Caco-2 (cell line): ENCODE measurements at regions of chr12 and their contacts with region 1.

Region 1: GRCh38 chr12:76790564-76791552 is 26.9 kb downstream of the ZDHHC17 start:
- DNase-seq: peak in 1 of 2 experiments; percentile 14
- H3K4me3 ChIP-seq: no peak overlapping the region
- H3K4me3 Mint-ChIP-seq: no peak overlapping the region
- H3K27ac Mint-ChIP-seq: no peak overlapping the region
- H3K4me1 ChIP-seq: peaks cover 4% of the 10 kb centered on the region; the same call in 1 of the 2 replicates
- H3K4me1 Mint-ChIP-seq: peaks cover 7% of the 10 kb centered on the region
- H3K27me3 ChIP-seq: no peaks in the 10 kb centered on the region
- H3K27me3 Mint-ChIP-seq: no peaks in the 10 kb centered on the region
- CTCF ChIP-seq: peak; percentile 23 to 59

Region 2: GRCh38 chr12:76685246-76685678 is 105.6 kb before region 1 on chr12:
- CTCF ChIA-PET with region 1: no interaction called
- POLR2A ChIA-PET with region 1: no interaction called
- intact Hi-C with region 1: loop called (anchors 2 kb)
- DNase-seq: no peak
- H3K4me3 ChIP-seq: no peak overlapping the region
- H3K4me3 Mint-ChIP-seq: no peak overlapping the region
- H3K27ac Mint-ChIP-seq: no peak overlapping the region
- H3K4me1 ChIP-seq: peaks cover 8% of the 10 kb centered on the region; the same call in 1 of the 2 replicates
- H3K4me1 Mint-ChIP-seq: peaks cover 14% of the 10 kb centered on the region
- H3K27me3 ChIP-seq: no peaks in the 10 kb centered on the region
- H3K27me3 Mint-ChIP-seq: no peaks in the 10 kb centered on the region
- CTCF ChIP-seq: no peak

Region 3: DNA sequence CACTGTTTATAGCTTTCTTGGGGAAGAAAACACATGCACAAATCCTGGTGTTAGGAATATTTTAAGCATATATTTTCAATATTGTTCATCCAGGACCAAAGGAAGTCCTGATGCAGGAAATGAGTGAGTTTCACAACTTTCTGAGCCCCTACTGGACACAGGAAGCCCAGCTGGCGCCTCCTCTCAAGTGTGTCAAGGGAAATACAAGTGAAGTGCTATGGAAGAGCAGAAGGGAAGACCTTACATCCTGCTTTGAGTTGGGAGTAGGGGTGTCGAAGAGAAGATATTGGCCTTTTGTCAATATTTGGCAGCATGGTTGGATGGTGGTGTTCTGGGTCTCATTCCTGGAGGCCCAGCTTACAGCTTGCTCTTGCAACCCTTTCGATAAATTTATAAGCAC is 93.0 kb before region 1 on chr12:
- CTCF ChIA-PET with region 1: no interaction called
- POLR2A ChIA-PET with region 1: no interaction called
- intact Hi-C with region 1: no loop called
- DNase-seq: no peak
- H3K4me3 ChIP-seq: no peak overlapping the region
- H3K4me3 Mint-ChIP-seq: no peak overlapping the region
- H3K27ac Mint-ChIP-seq: no peak overlapping the region
- H3K4me1 ChIP-seq: peaks cover 11% of the 10 kb centered on the region
- H3K4me1 Mint-ChIP-seq: peaks cover 31% of the 10 kb centered on the region
- H3K27me3 ChIP-seq: no peaks in the 10 kb centered on the region
- H3K27me3 Mint-ChIP-seq: no peaks in the 10 kb centered on the region
- CTCF ChIP-seq: no peak

Region 4: DNA sequence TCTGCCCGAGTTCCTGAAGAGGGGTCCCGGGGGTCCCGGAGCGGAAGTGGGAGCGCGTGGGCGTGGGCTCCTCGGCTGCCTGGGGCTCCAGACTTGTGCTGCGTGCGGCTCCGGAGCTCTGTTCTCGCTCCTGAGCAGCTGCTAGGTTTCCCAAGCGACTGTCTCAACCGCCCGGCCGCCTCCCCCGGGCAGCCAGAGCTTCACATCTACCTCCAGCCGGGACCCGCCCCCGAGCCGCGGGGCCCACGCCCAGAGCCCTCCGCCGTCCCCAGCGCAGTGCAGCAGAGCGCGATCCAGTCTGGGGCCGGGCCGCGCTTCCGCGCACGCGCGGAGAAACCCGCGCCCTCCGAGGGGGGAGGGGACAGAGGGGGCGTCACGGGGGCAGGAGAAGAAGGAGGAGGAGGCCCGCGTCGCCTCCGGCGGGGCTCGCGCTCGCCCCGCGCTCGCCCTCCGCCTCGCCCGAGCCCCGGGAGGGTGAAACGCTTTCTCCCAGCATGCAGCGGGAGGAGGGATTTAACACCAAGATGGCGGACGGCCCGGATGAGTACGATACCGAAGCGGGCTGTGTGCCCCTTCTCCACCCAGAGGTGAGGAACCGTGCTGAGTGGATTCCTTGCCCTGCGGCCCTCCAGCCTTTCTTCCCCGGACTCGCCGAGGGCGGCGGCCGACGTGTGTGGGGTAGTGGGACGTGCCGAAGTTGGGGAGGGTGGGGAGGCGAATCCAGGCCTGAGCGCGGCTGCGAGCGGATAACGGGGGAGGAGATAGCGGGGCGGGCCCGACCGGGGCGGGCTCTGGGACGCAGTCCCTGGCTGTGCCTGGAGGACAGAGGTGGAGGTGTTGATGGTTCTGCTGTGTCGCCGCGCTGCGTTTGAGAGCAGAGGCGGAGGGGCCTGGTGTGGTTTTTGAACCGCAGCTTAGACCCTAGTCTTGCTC is 26.8 kb before region 1 on chr12 and contains the start of gene ZDHHC17:
- CTCF ChIA-PET with region 1: no interaction called
- POLR2A ChIA-PET with region 1: no interaction called
- intact Hi-C with region 1: loop called (anchors 2 kb)
- DNase-seq: peak; percentile 95 to 97
- H3K4me3 ChIP-seq: peak within 1 kb of the TSS; percentile 98
- H3K4me3 Mint-ChIP-seq: peak within 1 kb of the TSS; percentile 95
- H3K27ac Mint-ChIP-seq: peak within 1 kb of the TSS; percentile 92
- H3K4me1 ChIP-seq: peaks cover 29% of the 10 kb centered on the region
- H3K4me1 Mint-ChIP-seq: peaks cover 18% of the 10 kb centered on the region
- H3K27me3 ChIP-seq: no peaks in the 10 kb centered on the region
- H3K27me3 Mint-ChIP-seq: no peaks in the 10 kb centered on the region
- CTCF ChIP-seq: no peak
- total RNA-seq, gene ZDHHC17: 31.1 and 32.2 TPM in 2 replicates